Activated naive CD4-positive, alpha-beta T cell treated with anti-CD3 and anti-CD28 coated beads for 36 hours (primary cell): ENCODE measurements at regions of chr15 and their contacts with region 1.

Region 1: GRCh38 chr15:93087825-93088199 is 1.2 kb downstream of the RGMA start:
- DNase-seq: peak; percentile 88
- H3K4me3 Mint-ChIP-seq: peak overlapping the region; percentile 70
- H3K27ac Mint-ChIP-seq: no peak overlapping the region
- H3K4me1 Mint-ChIP-seq: peaks cover 6% of the 10 kb centered on the region
- H3K27me3 Mint-ChIP-seq: peaks cover 56% of the 10 kb centered on the region

Region 2: GRCh38 chr15:91752081-91752785 is 1335.6 kb before region 1 on chr15:
- CTCF ChIA-PET with region 1: no interaction called
- intact Hi-C with region 1: no loop called
- DNase-seq: no peak
- H3K4me3 Mint-ChIP-seq: no peak overlapping the region
- H3K27ac Mint-ChIP-seq: no peak overlapping the region
- H3K4me1 Mint-ChIP-seq: no peaks in the 10 kb centered on the region
- H3K27me3 Mint-ChIP-seq: peaks cover 9% of the 10 kb centered on the region

Region 3: DNA sequence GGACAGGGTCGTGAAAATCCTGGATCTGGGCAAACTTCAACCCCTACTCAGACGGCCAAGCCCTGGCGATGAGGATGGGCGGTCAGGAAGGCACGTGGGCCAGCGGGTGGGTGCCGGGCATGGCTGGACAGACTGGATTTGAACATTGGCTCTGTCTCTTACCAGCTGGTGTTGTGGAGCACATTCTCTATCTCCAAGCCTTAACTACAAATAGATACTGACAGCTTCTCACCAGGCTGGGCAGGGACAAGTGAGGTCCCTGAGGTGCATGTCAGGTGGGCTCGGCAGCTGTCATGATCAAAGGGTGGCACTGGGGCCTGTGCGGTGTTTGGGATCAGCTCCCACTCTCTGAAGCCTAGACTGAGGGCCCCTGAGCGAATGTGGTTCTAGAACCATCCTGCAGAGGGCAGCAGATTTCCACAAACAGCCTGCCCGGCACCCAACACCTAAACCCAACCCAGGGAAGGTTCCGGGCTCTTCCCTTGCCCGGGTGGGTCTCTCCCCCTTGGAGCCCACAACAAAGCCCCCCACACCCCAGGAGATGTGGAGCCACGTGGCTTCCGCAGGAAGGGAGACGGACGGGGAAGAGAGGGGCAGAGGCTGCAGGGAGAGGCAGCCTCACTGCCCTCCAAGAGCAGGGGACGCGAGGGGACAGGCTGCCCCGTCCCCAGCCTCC is 57.2 kb before region 1 on chr15:
- CTCF ChIA-PET with region 1: interaction called, 15 read pairs
- intact Hi-C with region 1: loop called (anchors 1 kb)
- DNase-seq: peak; percentile 78
- H3K4me3 Mint-ChIP-seq: no peak overlapping the region
- H3K27ac Mint-ChIP-seq: no peak overlapping the region
- H3K4me1 Mint-ChIP-seq: peaks cover 33% of the 10 kb centered on the region
- H3K27me3 Mint-ChIP-seq: no peaks in the 10 kb centered on the region

Region 4: GRCh38 chr15:93046721-93047120 is 41.1 kb before region 1 on chr15:
- CTCF ChIA-PET with region 1: no interaction called
- intact Hi-C with region 1: no loop called
- DNase-seq: no peak
- H3K4me3 Mint-ChIP-seq: no peak overlapping the region
- H3K27ac Mint-ChIP-seq: no peak overlapping the region
- H3K4me1 Mint-ChIP-seq: peaks cover 12% of the 10 kb centered on the region
- H3K27me3 Mint-ChIP-seq: no peaks in the 10 kb centered on the region

Region 5: GRCh38 chr15:93072411-93073394 is 15.1 kb before region 1 on chr15:
- CTCF ChIA-PET with region 1: interaction called, 16 read pairs
- intact Hi-C with region 1: no loop called
- DNase-seq: no peak
- H3K4me3 Mint-ChIP-seq: peak overlapping the region; percentile 26
- H3K27ac Mint-ChIP-seq: no peak overlapping the region
- H3K4me1 Mint-ChIP-seq: peaks cover 15% of the 10 kb centered on the region
- H3K27me3 Mint-ChIP-seq: peaks cover 32% of the 10 kb centered on the region

Region 6: DNA sequence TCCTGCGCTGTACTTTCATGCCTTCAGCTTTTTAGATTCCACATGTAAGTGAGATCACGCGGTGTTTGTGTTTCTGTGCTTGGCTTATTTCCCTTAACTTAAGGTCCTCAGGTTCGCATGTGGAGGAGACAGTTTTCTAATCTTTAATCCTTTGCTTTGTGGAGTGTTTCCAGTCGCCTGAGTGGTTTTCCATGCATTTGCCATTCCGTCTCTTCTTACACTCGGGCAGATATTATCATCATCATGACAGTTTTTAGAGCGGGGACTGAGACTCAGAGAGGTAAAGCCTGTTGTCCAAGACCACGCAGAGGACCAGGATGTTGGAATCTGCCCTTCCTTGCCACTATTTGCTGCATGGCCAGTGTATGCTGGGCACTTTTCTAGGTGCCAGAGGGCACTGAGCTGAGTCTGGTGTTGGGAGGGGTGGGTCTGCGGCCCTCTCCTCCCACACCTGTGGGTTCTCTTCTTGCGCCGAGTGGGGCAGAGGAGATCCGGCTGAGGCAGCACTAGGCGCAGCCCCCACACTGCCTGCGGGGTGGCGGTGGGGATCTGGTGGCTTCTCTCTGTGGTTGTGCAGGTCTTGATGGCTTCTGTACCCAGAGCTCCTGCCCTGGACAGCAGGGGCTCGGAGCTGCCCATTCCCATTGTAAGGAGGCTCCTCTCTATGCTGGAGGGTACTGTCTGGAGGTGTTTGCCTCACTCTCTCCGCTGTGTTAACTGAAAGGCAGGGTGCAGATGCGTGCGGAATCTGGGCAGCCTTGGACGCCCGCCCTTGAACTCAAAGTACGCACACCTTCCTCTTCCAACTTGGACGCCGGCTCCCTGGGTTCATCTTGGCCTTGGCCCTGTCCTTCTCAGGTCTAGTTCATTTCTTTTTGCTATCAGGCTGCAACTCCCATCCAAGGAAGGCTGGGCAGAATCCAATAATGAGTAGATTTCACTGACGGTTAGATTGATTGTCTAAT is 157.2 kb after region 1 on chr15:
- CTCF ChIA-PET with region 1: no interaction called
- intact Hi-C with region 1: loop called (anchors 5 kb)
- DNase-seq: no peak
- H3K4me3 Mint-ChIP-seq: no peak overlapping the region
- H3K27ac Mint-ChIP-seq: no peak overlapping the region
- H3K4me1 Mint-ChIP-seq: peaks cover 13% of the 10 kb centered on the region
- H3K27me3 Mint-ChIP-seq: peaks cover 11% of the 10 kb centered on the region

Region 7: GRCh38 chr15:93331545-93332167 is 243.8 kb after region 1 on chr15:
- CTCF ChIA-PET with region 1: interaction called, 3 read pairs
- intact Hi-C with region 1: loop called (anchors 5 kb)
- DNase-seq: no peak
- H3K4me3 Mint-ChIP-seq: no peak overlapping the region
- H3K27ac Mint-ChIP-seq: no peak overlapping the region
- H3K4me1 Mint-ChIP-seq: no peaks in the 10 kb centered on the region
- H3K27me3 Mint-ChIP-seq: peaks cover 31% of the 10 kb centered on the region

Region 8: GRCh38 chr15:94119923-94120775 is 1032.3 kb after region 1 on chr15:
- CTCF ChIA-PET with region 1: interaction called, 15 read pairs
- intact Hi-C with region 1: loop called (anchors 1 kb)
- DNase-seq: peak; percentile 75
- H3K4me3 Mint-ChIP-seq: no peak overlapping the region
- H3K27ac Mint-ChIP-seq: no peak overlapping the region
- H3K4me1 Mint-ChIP-seq: no peaks in the 10 kb centered on the region
- H3K27me3 Mint-ChIP-seq: no peaks in the 10 kb centered on the region